ENCODE measurements at regions of chr16 and their contacts with region 1.

Region 1: DNA sequence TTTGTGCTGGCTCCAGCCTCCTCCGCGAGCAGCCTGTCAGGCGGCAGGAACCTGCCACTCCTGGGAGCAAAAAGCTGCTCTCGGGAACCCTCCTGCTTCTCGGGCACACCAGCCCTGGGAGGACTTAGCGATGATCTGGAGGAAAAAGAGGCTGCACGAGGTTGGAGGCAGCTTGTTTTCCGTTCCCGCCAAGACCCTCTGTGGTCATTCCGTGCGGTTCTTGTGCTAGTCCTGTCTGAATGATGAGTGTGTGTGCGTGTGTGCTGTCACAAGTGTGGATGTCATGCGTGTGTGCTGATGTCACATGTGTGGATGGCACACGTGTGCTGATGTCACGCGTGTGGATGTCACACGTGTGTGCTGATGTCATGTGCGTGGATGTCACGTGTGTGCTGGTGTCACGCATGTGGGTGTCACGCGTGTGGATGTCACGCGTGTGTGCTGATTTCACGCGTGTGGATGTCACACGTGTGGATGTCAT is 150.0 kb downstream of the NPIPB11 start:
- DNase-seq: peak in 4 of 5 donors; percentile 26 to 53 (median 45)
- H3K4me3 ChIP-seq: no peak overlapping the region
- H3K27ac ChIP-seq: peak overlapping the region in 1 of 2 donors; percentile 90
- H3K4me1 ChIP-seq: peaks cover 33% of the 10 kb centered on the region
- H3K27me3 ChIP-seq: no peaks in the 10 kb centered on the region
- CTCF ChIP-seq: no peak
- EP300 ChIP-seq: no peak
- POLR2A ChIP-seq: no peak

Region 2: GRCh38 chr16:28166394-28167208 is 1089.9 kb before region 1 on chr16:
- intact Hi-C with region 1: no loop called
- DNase-seq: no peak
- H3K4me3 ChIP-seq: no peak overlapping the region
- H3K27ac ChIP-seq: no peak overlapping the region
- H3K4me1 ChIP-seq: peaks cover 5% of the 10 kb centered on the region
- H3K27me3 ChIP-seq: no peaks in the 10 kb centered on the region
- CTCF ChIP-seq: no peak
- EP300 ChIP-seq: no peak
- POLR2A ChIP-seq: no peak

Region 3: GRCh38 chr16:29112755-29113347 is 143.7 kb before region 1 on chr16:
- intact Hi-C with region 1: loop called in 2 of 4 experiments (anchors 5 to 10 kb)
- DNase-seq: no peak
- H3K4me3 ChIP-seq: no peak overlapping the region
- H3K27ac ChIP-seq: no peak overlapping the region
- H3K4me1 ChIP-seq: peaks cover 7% of the 10 kb centered on the region
- H3K27me3 ChIP-seq: no peaks in the 10 kb centered on the region
- CTCF ChIP-seq: peak in 1 of 3 donors; percentile 8
- EP300 ChIP-seq: no peak
- POLR2A ChIP-seq: no peak

Region 4: DNA sequence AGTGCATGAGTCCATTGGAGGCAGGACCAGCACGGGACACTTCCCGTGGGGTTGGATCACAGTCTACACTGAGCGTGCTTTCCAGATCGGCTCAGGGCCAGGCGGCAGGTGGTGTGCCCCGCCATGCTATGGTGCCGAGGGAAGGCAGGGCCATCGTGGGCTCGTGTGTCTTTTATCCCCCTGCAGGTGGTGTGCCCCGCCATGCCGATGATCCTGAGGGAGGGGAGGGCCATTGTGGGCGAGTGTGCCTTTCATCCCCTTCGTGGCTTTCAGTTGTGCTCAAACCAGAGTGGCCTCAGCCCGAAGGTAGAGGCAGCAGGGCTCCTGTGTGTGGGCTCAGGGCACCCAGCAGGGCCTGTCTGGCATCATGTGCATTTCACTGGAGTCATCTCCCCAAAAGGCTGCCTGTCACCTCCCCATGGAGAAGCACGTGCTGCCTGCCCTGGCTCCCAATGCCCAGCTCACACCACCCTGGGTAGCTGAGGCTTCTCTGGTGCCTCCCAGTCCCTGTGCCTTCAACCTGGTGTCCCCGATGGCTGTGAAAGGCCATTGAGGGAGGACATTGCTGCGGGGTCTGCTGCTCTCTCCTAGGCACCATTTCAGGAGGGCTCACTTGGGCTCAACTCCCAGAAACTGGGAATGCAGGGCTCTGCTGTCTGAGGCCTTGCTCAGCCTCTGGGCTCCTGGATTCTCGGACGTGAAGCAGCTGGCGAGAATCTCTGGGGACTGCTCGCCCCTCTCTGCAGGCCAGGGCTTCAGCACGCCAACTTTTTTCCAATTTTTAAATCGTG is 57.6 kb before region 1 on chr16:
- intact Hi-C with region 1: loop called in 1 of 4 experiments (anchors 5 kb)
- DNase-seq: peak in 4 of 5 donors; percentile 44 to 57 (median 49)
- H3K4me3 ChIP-seq: no peak overlapping the region
- H3K27ac ChIP-seq: peak overlapping the region; percentile 86 to 88
- H3K4me1 ChIP-seq: peaks cover 23% of the 10 kb centered on the region
- H3K27me3 ChIP-seq: no peaks in the 10 kb centered on the region
- CTCF ChIP-seq: no peak
- EP300 ChIP-seq: no peak
- POLR2A ChIP-seq: no peak